Motor neuron (in vitro differentiated cells): ENCODE measurements at regions of chr18 and their contacts with region 1.

Region 1: GRCh38 chr18:43271593-43272432 is 5.5 kb downstream of the SYT4 start:
- ATAC-seq: peak in 1 of 8 experiments; percentile 38
- H3K4me3 ChIP-seq: peak overlapping the region in 3 of 5 donors; percentile 1 to 22 (median 14)
- H3K27ac ChIP-seq: no peak overlapping the region
- H3K4me1 ChIP-seq: peaks cover 0 to 24% of the 10 kb centered on the region in 2 donors

Region 2: DNA sequence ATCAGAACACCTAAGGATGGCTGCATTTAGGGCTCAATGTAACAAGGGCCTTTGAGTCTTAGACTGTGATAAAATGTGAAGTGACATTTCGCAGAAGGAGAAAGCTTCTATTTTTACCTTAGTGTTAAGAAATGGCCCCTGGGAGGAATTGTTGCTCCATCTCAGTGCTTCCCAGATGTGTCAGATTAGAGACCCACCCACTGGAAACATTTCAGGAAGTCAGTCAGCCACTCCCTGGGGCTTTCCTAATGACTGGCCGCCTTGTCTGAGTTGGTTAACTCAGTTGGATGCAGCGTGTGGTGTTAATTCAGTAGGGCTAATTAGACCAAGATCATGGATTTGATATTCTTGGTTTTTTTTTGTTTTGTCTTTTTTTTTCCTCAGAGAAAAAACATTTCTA is 960.9 kb before region 1 on chr18:
- in situ Hi-C with region 1: loop called in 1 of 9 experiments (anchors 25 kb)
- ATAC-seq: peak in 4 of 8 experiments; percentile 44 to 98 (median 85)
- H3K4me3 ChIP-seq: no peak overlapping the region
- H3K27ac ChIP-seq: no peak overlapping the region
- H3K4me1 ChIP-seq: peaks cover 0 to 4% of the 10 kb centered on the region in 2 donors

Region 3: GRCh38 chr18:42578781-42579180 is 693.0 kb before region 1 on chr18:
- in situ Hi-C with region 1: loop called in 1 of 9 experiments (anchors 25 kb)
- ATAC-seq: peak in 3 of 8 experiments; percentile 69 to 77 (median 69)
- H3K4me3 ChIP-seq: no peak overlapping the region
- H3K27ac ChIP-seq: no peak overlapping the region
- H3K4me1 ChIP-seq: peaks cover 0 to 5% of the 10 kb centered on the region in 2 donors

Region 4: GRCh38 chr18:43034683-43035505 is 236.9 kb before region 1 on chr18:
- in situ Hi-C with region 1: no loop called
- ATAC-seq: peak in 3 of 8 experiments; percentile 31 to 98 (median 35)
- H3K4me3 ChIP-seq: no peak overlapping the region
- H3K27ac ChIP-seq: no peak overlapping the region
- H3K4me1 ChIP-seq: peaks cover 0 to 2% of the 10 kb centered on the region in 2 donors

Region 5: GRCh38 chr18:43322132-43322531 is 50.3 kb after region 1 on chr18:
- in situ Hi-C with region 1: no loop called
- ATAC-seq: peak in 5 of 8 experiments; percentile 45 to 73 (median 65)
- H3K4me3 ChIP-seq: no peak overlapping the region
- H3K27ac ChIP-seq: no peak overlapping the region
- H3K4me1 ChIP-seq: peaks cover 0 to 7% of the 10 kb centered on the region in 2 donors